GM10248 (cell line): ENCODE measurements at regions of chr1 and their contacts with region 1.

Region 1: GRCh38 chr1:108125312-108126138 is 74.6 kb downstream of the SLC25A24 start:
- DNase-seq: peak; percentile 71
- CTCF ChIP-seq: peak; percentile 85

Region 2: GRCh38 chr1:108114033-108114599 is 11.4 kb before region 1 on chr1:
- CTCF ChIA-PET with region 1: interaction called, 10 read pairs
- POLR2A ChIA-PET with region 1: no interaction called
- DNase-seq: no peak
- CTCF ChIP-seq: no peak

Region 3: DNA sequence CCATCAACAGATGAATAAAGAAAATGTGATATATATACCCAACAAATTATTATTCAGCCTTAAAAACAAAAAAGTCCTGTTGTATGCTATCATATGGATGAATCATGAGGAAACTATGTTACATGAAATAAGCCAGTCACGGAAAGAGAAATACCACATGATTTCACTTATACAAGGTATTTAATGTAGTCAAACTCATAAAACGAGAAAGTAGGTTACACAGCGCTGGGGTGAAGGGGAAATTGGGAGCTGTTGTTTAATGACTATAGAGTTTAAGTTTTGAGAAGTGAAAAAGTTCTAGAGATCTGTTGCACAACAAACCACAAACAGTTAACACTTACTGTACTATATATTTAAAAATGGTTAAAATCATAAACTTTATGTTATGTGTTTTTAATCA is 16.1 kb after region 1 on chr1:
- CTCF ChIA-PET with region 1: interaction called, 10 read pairs
- POLR2A ChIA-PET with region 1: no interaction called
- DNase-seq: no peak
- CTCF ChIP-seq: no peak